Heart right ventricle (tissue), 16 donors: ENCODE measurements at regions of chr7 and their contacts with region 1.

Region 1: GRCh38 chr7:121366852-121367431 is 29.2 kb downstream of the FAM3C start:
- DNase-seq: no peak
- ATAC-seq: no peak
- H3K4me3 ChIP-seq: no peak overlapping the region
- H3K27ac ChIP-seq: no peak overlapping the region
- H3K4me1 ChIP-seq: peaks cover 0 to 22% (median 8%) of the 10 kb centered on the region in 9 donors
- H3K27me3 ChIP-seq: no peaks in the 10 kb centered on the region
- CTCF ChIP-seq: peak; percentile 55 to 90 (median 80)

Region 2: DNA sequence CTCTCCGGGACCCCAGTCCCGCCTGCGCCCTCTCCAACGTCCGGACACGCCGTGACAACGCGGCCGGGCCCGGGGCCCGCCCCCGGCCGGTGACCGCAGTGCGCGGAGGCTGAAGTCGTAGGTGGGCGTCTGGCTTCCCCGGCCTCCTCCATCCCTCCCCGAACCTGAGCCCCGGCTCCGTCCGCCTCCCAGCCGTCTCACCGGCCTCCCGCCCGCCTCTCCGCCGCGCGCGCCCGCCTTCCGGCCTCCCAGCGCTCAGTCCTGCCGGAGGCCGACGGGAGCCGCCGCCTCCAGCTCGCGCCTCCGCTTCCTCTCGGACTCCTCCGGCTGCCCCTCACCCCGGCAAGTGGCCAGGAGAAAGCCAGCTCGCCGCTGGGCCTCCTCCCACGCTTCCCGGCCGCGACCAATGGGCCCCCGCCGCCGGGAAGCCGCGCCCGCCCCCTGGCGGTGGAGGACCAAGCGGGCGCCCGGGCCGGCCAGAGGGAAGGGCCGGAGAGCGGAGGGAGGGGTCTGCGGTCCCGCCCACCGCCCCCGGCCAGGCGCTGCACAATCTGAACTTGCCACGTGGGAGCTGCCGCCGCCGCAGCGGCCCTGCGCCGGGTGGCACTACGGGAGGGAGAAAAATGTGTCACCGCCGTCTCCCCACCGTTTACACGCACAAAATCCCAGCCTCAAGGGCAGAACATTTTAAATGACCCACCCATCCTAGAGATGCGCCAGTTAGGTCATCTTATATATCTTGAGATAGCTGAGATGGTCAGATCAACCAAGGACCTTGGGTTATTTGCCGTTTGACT is 29.2 kb after region 1 on chr7 and contains the start of gene FAM3C:
- intact Hi-C with region 1: loop called in 1 of 10 experiments (anchors 2 kb)
- DNase-seq: peak; percentile 92 to 94
- ATAC-seq: peak; percentile 97 to 100 (median 99)
- H3K4me3 ChIP-seq: peak within 1 kb of the TSS; percentile 27 to 90 (median 81)
- H3K27ac ChIP-seq: peak within 1 kb of the TSS; percentile 20 to 92 (median 88)
- H3K4me1 ChIP-seq: peaks cover 0 to 28% (median 13%) of the 10 kb centered on the region in 9 donors
- H3K27me3 ChIP-seq: no peaks in the 10 kb centered on the region
- CTCF ChIP-seq: peak; percentile 91 to 99 (median 97)
- total RNA-seq, gene FAM3C: 33.3 to 51.8 (median 43.0) TPM

Region 3: GRCh38 chr7:121547544-121548092 is 180.7 kb after region 1 on chr7:
- intact Hi-C with region 1: loop called (anchors 1 to 5 kb)
- DNase-seq: no peak
- ATAC-seq: peak in 7 of 8 donors; percentile 61 to 82 (median 74)
- H3K4me3 ChIP-seq: no peak overlapping the region
- H3K27ac ChIP-seq: no peak overlapping the region
- H3K4me1 ChIP-seq: peaks cover 0 to 11% (median 0%) of the 10 kb centered on the region in 9 donors
- H3K27me3 ChIP-seq: no peaks in the 10 kb centered on the region
- CTCF ChIP-seq: peak; percentile 53 to 91 (median 82)

Region 4: DNA sequence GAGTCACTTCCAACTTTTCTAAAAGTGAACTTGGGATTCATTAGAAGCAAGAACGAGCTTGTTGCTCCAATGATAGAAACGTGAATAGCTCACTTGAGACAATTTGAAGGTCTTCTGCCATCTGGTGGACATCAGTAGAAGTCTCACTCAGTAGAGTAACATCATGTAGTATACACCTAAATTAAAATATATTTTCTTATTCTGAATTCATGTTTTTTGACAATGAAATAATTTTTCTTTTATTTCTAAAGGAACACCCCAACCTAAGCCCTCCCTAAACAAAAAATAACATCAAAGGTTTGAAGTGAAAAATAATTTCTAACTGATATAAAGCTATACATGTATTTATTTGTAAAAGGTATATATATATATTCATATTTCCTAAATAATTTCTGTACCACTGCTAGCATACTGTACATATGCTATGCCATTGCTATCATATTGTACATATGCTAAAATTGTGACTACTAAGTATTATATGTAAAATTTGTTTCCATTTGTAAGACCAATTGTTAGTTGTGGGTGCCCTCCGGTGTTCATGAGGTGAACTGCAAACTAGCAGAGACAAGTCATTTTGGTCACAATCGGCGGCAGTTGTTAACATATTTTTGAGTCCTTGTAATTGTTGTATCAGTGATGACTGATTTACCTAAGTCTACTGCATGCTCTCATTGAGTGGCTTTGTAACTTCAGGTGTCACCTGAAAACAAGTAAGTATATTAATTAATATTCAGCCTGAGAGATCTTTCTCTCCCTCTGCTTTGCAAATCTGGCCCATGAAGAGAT is 627.9 kb after region 1 on chr7:
- intact Hi-C with region 1: loop called in 4 of 10 experiments (anchors 2 to 10 kb)
- DNase-seq: peak; percentile 16 to 19
- ATAC-seq: peak in 5 of 8 donors; percentile 60 to 73 (median 69)
- H3K4me3 ChIP-seq: no peak overlapping the region
- H3K27ac ChIP-seq: no peak overlapping the region
- H3K4me1 ChIP-seq: no peaks in the 10 kb centered on the region
- H3K27me3 ChIP-seq: peaks cover 0 to 5% (median 0%) of the 10 kb centered on the region in 7 donors
- CTCF ChIP-seq: peak; percentile 12 to 66 (median 47)